ENCODE measurements at regions of chr1 and their contacts with region 1.

Region 1: DNA sequence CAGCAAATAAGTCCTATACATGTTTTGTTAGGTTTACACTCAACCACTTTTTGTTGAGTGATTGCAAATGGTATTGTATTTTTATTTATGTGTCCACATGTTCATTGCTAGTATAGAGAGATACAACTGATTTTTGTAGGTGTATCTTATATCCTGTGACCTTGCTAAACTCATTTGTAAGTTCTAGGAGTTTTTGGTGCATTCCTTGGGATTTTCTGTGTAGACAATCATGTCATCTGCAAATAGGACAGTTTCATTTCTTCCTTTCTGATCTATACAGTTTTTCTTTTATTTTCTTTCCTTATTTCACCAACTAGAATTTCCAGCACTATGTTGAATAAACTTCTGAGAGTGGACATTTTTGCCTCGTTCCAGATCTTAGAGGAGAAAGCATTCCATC is 16.5 kb upstream of the BATF3 start:
- DNase-seq: no peak
- H3K4me3 Mint-ChIP-seq: no peak overlapping the region
- H3K27ac Mint-ChIP-seq: no peak overlapping the region
- H3K4me1 Mint-ChIP-seq: peaks cover 20% of the 10 kb centered on the region
- H3K27me3 Mint-ChIP-seq: peaks cover 3% of the 10 kb centered on the region

Region 2: GRCh38 chr1:212699104-212699624 is 17.0 kb before region 1 on chr1:
- CTCF ChIA-PET with region 1: interaction called, 11 read pairs
- POLR2A ChIA-PET with region 1: no interaction called
- DNase-seq: peak; percentile 46
- H3K4me3 Mint-ChIP-seq: peak overlapping the region; percentile 74
- H3K27ac Mint-ChIP-seq: peak overlapping the region; percentile 75
- H3K4me1 Mint-ChIP-seq: peaks cover 53% of the 10 kb centered on the region
- H3K27me3 Mint-ChIP-seq: peaks cover 21% of the 10 kb centered on the region

Region 3: GRCh38 chr1:212838145-212838544 is 122.0 kb after region 1 on chr1:
- CTCF ChIA-PET with region 1: no interaction called
- POLR2A ChIA-PET with region 1: no interaction called
- DNase-seq: no peak
- H3K4me3 Mint-ChIP-seq: no peak overlapping the region
- H3K27ac Mint-ChIP-seq: no peak overlapping the region
- H3K4me1 Mint-ChIP-seq: peaks cover 6% of the 10 kb centered on the region
- H3K27me3 Mint-ChIP-seq: no peaks in the 10 kb centered on the region